ENCODE measurements at regions of chr4 and their contacts with region 1.

Region 1: GRCh38 chr4:83012687-83013419 is 2.2 kb upstream of the LIN54 start:
- DNase-seq: peak; percentile 98
- H3K4me3 Mint-ChIP-seq: peak overlapping the region; percentile 92
- H3K27ac Mint-ChIP-seq: peak overlapping the region; percentile 96
- H3K4me1 Mint-ChIP-seq: peaks cover 34% of the 10 kb centered on the region
- H3K27me3 Mint-ChIP-seq: no peaks in the 10 kb centered on the region
- CTCF ChIP-seq: peak; percentile 35

Region 2: DNA sequence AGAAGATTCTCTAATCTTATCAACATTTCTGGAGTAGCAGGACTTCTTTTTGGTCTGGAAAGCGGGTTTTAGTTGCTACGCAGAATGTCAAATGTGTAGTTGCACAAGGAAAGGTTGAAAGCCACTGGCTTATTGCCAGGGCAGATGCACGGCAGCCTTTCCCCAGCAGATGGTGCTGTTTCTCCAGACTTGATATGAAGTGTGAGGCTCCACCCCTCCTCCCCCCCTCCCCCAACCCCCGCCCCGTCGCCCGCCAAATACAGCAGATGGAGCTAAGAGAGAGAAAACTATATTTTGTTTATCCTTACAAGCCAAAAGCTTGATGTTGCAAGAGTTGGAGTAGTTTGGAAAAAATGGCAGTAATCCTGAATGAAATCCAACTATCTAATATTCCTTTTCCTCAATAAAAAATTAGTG is 550.4 kb before region 1 on chr4:
- CTCF ChIA-PET with region 1: no interaction called
- POLR2A ChIA-PET with region 1: no interaction called
- intact Hi-C with region 1: loop called (anchors 10 kb)
- DNase-seq: peak; percentile 90
- H3K4me3 Mint-ChIP-seq: no peak overlapping the region
- H3K27ac Mint-ChIP-seq: no peak overlapping the region
- H3K4me1 Mint-ChIP-seq: peaks cover 6% of the 10 kb centered on the region
- H3K27me3 Mint-ChIP-seq: no peaks in the 10 kb centered on the region
- CTCF ChIP-seq: peak; percentile 86

Region 3: GRCh38 chr4:82652062-82652461 is 360.8 kb before region 1 on chr4:
- CTCF ChIA-PET with region 1: no interaction called
- POLR2A ChIA-PET with region 1: no interaction called
- intact Hi-C with region 1: no loop called
- DNase-seq: peak; percentile 20
- H3K4me3 Mint-ChIP-seq: no peak overlapping the region
- H3K27ac Mint-ChIP-seq: no peak overlapping the region
- H3K4me1 Mint-ChIP-seq: peaks cover 9% of the 10 kb centered on the region
- H3K27me3 Mint-ChIP-seq: no peaks in the 10 kb centered on the region
- CTCF ChIP-seq: no peak

Region 4: GRCh38 chr4:82890901-82891706 is 121.7 kb before region 1 on chr4 and contains the start of gene SEC31A:
- CTCF ChIA-PET with region 1: interaction called, 3 read pairs
- POLR2A ChIA-PET with region 1: interaction called, 168 read pairs
- intact Hi-C with region 1: no loop called
- DNase-seq: peak; percentile 95
- H3K4me3 Mint-ChIP-seq: peak within 1 kb of the TSS; percentile 86
- H3K27ac Mint-ChIP-seq: peak within 1 kb of the TSS; percentile 98
- H3K4me1 Mint-ChIP-seq: peaks cover 24% of the 10 kb centered on the region
- H3K27me3 Mint-ChIP-seq: no peaks in the 10 kb centered on the region
- CTCF ChIP-seq: no peak
- total RNA-seq, gene SEC31A: 212 and 229 TPM in 2 replicates

Region 5: GRCh38 chr4:83028976-83029375 is 16.1 kb after region 1 on chr4:
- CTCF ChIA-PET with region 1: interaction called, 4 read pairs
- POLR2A ChIA-PET with region 1: interaction called, 11 read pairs
- intact Hi-C with region 1: no loop called
- DNase-seq: no peak
- H3K4me3 Mint-ChIP-seq: no peak overlapping the region
- H3K27ac Mint-ChIP-seq: no peak overlapping the region
- H3K4me1 Mint-ChIP-seq: no peaks in the 10 kb centered on the region
- H3K27me3 Mint-ChIP-seq: no peaks in the 10 kb centered on the region
- CTCF ChIP-seq: no peak

Region 6: DNA sequence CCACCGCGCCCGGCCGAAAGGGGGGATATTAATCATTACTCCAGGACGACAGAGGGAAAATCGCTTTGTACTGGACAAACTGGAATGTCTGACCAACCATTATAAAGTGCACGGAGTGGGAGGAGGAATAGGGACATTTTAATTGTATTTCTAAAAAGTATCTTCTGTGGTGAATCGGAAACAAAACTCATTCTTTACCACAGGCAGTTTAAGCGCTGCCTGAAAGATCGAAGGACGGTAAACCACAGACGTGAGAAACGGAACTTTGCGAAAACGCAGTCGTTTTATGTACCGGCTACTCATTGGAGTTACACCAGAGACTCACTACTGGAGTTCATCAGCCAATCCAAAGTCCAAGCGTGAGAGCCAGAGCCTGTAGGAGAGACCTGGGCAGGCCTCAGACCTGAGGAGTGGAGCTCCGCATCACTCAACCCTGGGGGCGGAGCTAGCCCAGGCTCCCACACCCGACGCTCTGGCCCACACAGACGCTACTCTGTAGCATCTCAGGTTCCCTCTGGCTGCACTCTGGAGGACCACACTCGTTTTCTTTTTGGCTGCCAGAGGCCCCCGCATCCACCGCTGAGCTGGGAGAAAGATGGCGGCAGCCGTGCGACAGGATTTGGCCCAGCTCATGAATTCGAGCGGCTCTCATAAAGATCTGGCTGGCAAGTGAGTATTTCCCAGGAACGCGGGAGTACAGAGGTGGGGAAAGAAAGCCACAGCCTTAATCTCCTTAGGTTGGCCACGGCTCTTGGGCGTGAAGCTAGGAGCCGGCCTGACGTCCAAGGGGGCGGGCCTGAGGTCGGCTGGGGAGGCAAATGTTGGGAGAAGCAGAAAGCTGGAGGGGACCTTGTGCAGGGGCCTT is 22.0 kb after region 1 on chr4 and contains the start of gene COPS4:
- CTCF ChIA-PET with region 1: interaction called, 8 read pairs
- POLR2A ChIA-PET with region 1: interaction called, 103 read pairs
- intact Hi-C with region 1: loop called (anchors 1 kb)
- DNase-seq: peak; percentile 100
- H3K4me3 Mint-ChIP-seq: peak within 1 kb of the TSS; percentile 96
- H3K27ac Mint-ChIP-seq: peak within 1 kb of the TSS; percentile 92
- H3K4me1 Mint-ChIP-seq: peaks cover 8% of the 10 kb centered on the region
- H3K27me3 Mint-ChIP-seq: no peaks in the 10 kb centered on the region
- CTCF ChIP-seq: no peak
- total RNA-seq, gene COPS4: 34.7 and 36.6 TPM in 2 replicates

Region 7: DNA sequence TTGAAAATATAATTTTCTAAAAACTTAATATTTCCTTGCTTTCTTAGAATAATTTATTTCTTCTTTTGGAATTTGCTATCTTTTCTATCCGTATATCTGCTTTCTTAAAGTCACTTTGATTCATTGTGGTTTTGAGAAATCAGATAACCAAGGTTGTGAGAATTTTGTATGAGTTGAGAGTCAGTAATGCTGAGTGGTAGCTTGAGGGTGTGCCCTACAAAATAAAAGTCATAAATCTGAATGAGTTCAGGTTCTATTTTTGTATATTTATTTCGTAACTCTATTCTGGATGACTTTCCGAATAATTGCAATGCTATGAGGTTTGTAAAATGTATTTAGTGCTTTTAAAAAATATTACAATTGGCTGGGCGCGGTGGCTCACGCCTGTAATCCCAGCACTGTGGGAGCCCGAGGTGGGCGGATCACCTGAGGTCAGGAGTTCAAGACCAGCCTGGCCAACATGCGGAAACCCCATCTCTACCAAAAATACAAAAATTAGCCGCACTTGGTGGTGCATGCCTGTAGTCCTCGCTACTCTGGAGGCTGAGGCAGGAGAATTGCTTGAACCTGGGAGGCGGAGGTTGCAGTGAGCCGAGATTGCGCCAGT is 31.1 kb after region 1 on chr4:
- CTCF ChIA-PET with region 1: interaction called, 3 read pairs
- POLR2A ChIA-PET with region 1: interaction called, 13 read pairs
- intact Hi-C with region 1: no loop called
- DNase-seq: peak; percentile 56
- H3K4me3 Mint-ChIP-seq: no peak overlapping the region
- H3K27ac Mint-ChIP-seq: peak overlapping the region; percentile 31
- H3K4me1 Mint-ChIP-seq: peaks cover 5% of the 10 kb centered on the region
- H3K27me3 Mint-ChIP-seq: no peaks in the 10 kb centered on the region
- CTCF ChIP-seq: no peak

Measured in MCF 10A (cell line).